OCI-LY7 (cell line): ENCODE measurements at regions of chr2 and their contacts with region 1.

Region 1: GRCh38 chr2:10072656-10073480 is 7.3 kb downstream of the CYS1 start:
- DNase-seq: peak; percentile 91
- H3K4me3 ChIP-seq: no peak overlapping the region
- H3K27ac ChIP-seq: no peak overlapping the region
- H3K4me1 ChIP-seq: peaks cover 17% of the 10 kb centered on the region
- CTCF ChIP-seq: peak; percentile 93

Region 2: DNA sequence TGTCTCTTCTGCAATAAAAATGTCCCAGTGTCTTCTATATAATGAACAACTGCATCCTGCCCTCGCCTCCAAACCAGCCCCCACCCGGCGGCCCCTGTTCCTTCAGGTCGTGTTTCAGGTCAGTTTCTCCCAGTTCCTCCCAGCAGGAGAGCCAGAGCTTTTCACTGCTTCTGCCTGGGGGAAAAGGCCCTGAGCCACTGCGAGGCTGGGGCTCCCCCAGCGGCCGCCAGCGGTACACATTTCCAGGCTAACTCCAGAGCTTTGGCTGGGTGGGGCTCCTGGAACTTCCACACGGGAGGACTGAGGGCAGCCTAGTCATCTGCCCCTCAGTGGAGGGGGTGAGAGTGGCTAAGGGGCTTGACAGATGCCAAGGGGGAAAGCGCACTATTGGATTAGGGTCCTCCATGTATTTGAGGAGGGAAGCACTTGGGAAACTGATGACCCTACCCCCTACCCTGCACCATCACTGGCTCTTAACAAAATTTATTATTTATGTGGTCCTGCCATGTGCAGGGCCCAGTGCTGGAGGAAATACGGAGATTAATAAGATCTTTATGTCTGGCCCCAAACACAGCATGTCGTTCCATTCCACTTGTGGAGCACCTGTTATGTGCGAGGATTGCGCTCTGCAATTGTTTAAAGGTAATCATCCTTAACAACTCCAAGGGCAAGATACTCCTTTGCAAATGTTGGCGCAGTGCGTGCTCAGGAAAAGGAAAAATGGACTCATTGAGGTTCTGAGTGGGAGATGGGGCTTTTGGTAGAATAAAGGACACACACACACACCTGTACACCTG is 24.7 kb after region 1 on chr2:
- CTCF ChIA-PET with region 1: interaction called, 23 read pairs
- POLR2A ChIA-PET with region 1: interaction called, 8 read pairs
- intact Hi-C with region 1: loop called (anchors 1 kb)
- DNase-seq: peak; percentile 59
- H3K4me3 ChIP-seq: no peak overlapping the region
- H3K27ac ChIP-seq: no peak overlapping the region
- H3K4me1 ChIP-seq: peaks cover 10% of the 10 kb centered on the region
- CTCF ChIP-seq: peak; percentile 95

Region 3: GRCh38 chr2:10122386-10123280 is 49.8 kb after region 1 on chr2 and contains the start of gene RRM2:
- CTCF ChIA-PET with region 1: interaction called, 3 read pairs
- POLR2A ChIA-PET with region 1: interaction called, 6 read pairs
- intact Hi-C with region 1: loop called (anchors 2 kb)
- DNase-seq: peak; percentile 97
- H3K4me3 ChIP-seq: peak within 1 kb of the TSS; percentile 81
- H3K27ac ChIP-seq: peak within 1 kb of the TSS; percentile 91
- H3K4me1 ChIP-seq: peaks cover 54% of the 10 kb centered on the region
- CTCF ChIP-seq: no peak
- total RNA-seq, gene RRM2: 181 and 222 TPM in 2 replicates

Region 4: DNA sequence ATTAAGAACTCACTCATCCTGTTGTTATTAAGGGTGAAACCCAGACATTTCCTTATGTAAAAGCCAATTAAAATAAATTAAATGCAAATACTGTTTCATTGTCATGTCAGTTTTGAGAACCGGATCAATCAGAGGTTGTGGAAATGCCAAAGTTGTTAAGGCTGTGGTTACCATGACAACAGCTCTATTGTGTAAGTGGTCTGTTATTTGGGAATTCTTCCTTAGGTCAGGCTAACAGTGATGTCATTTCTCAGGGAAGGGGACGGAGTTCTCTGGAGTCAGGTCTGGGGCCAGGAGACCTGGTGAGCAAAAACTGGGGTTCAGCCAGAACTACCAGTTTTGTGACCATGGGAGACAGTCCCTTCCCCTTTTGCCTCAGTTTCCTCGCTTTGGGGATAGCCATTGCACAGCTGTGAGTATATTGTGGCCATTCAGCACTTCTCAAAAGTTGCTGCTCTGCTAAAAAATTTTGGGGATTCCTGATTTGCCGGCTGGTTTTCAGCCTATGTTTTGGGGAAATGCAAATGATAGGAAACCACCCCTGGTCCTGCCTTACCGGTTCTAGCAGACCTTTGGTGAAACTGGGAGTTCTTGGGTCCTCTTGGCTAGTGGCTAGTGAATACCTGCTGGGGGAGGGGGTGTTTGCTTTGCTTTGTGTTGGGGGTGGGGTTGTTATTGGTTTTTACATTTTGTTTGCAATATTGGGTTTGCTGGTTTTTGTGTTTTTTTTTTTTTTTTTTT is 251.4 kb after region 1 on chr2:
- CTCF ChIA-PET with region 1: no interaction called
- POLR2A ChIA-PET with region 1: no interaction called
- intact Hi-C with region 1: no loop called
- DNase-seq: no peak
- H3K4me3 ChIP-seq: no peak overlapping the region
- H3K27ac ChIP-seq: no peak overlapping the region
- H3K4me1 ChIP-seq: peaks cover 56% of the 10 kb centered on the region
- CTCF ChIP-seq: no peak